T-cell (primary cell): ENCODE measurements at regions of chr9 and their contacts with region 1.

Region 1: DNA sequence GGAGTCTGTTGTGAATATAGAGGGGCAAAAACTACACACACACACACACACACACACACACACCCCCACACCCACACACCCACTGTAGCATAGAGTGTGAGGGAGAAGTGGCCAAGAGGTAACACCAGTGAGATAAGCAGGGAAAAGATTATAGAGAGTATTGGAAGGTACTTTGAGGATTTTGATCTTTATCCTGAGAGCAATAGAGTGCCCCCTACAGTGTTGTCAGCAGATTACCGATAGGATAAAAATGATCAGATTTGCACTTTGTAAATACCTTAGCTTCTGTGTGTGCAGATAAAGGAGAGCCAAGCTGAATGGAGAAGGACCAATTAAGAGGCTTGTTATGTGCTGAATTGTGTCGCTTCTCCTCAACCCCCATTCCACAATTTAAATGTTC is 32.3 kb downstream of the ERCC6L2 start:
- DNase-seq: peak in 1 of 35 experiments; percentile 18
- ATAC-seq: no peak
- H3K4me3 ChIP-seq: no peak overlapping the region
- H3K4me3 Mint-ChIP-seq: no peak overlapping the region
- H3K27ac ChIP-seq: no peak overlapping the region
- H3K27ac Mint-ChIP-seq: no peak overlapping the region
- H3K4me1 ChIP-seq: no peaks in the 10 kb centered on the region
- H3K4me1 Mint-ChIP-seq: peaks cover 21 to 40% (median 29%) of the 10 kb centered on the region in 3 donors
- H3K27me3 ChIP-seq: no peaks in the 10 kb centered on the region
- H3K27me3 Mint-ChIP-seq: no peaks in the 10 kb centered on the region

Region 2: DNA sequence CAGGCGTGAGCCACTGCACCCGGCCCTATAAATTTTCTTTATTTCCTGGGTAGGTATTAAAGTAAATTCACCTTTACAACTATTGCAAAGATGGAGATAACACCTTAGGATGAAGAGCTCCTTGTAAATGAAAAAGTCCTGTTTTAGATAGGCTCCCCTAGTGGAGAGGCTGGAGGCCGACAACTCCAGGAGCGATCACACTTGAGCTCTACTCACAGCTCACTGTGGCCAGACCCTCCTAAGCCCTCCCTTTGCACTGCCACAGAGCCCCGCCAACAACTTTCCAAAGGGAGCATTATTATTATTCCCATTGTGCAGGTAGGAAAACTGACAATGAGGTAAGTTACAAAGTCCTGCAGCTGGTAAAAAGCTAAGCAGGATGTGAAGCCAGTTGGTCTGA is 171.4 kb before region 1 on chr9:
- CTCF ChIA-PET with region 1: no interaction called
- POLR2A ChIA-PET with region 1: interaction called in 1 of 2 experiments, 11 read pairs
- DNase-seq: peak in 1 of 35 experiments; percentile 12
- ATAC-seq: no peak
- H3K4me3 ChIP-seq: no peak overlapping the region
- H3K4me3 Mint-ChIP-seq: no peak overlapping the region
- H3K27ac ChIP-seq: no peak overlapping the region
- H3K27ac Mint-ChIP-seq: no peak overlapping the region
- H3K4me1 ChIP-seq: peaks cover 6 to 7% of the 10 kb centered on the region in 2 experiments
- H3K4me1 Mint-ChIP-seq: peaks cover 16 to 21% (median 17%) of the 10 kb centered on the region in 3 donors
- H3K27me3 ChIP-seq: peaks cover 0 to 9% of the 10 kb centered on the region in 2 experiments
- H3K27me3 Mint-ChIP-seq: peaks cover 2 to 17% of the 10 kb centered on the region in 2 donors